ENCODE measurements at regions of chr1 and their contacts with region 1.

Region 1: DNA sequence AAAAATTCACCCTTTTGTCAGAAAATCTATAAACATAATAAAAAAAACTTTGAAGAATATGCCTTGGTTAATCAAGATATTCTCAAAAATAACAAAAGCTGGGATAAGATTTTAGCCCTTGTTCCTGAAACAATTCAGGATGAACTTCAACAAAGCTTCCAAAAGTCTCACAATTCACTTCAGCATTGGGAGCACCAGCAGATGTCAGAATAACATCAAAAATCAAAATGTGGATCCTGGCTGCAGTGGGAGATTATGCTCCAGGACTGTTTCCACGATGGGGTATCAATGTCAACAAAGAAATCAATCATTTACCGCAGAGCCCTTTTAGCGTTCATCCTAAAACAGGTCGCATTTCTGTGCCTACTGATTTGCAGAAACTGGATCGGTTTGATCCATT is 35.2 kb downstream of the ZNF670 start:
- DNase-seq: no peak
- ATAC-seq: no peak
- H3K4me3 ChIP-seq: no peak overlapping the region
- H3K27ac ChIP-seq: no peak overlapping the region
- H3K4me1 ChIP-seq: no peaks in the 10 kb centered on the region
- H3K27me3 ChIP-seq: no peaks in the 10 kb centered on the region
- CTCF ChIP-seq: peak in 8 of 12 donors; percentile 11 to 51 (median 30)
- POLR2A ChIP-seq: no peak

Region 2: GRCh38 chr1:246932366-246932700 is 111.1 kb before region 1 on chr1:
- intact Hi-C with region 1: no loop called
- DNase-seq: no peak
- ATAC-seq: no peak
- H3K4me3 ChIP-seq: peak overlapping the region; percentile 61 to 98 (median 90)
- H3K27ac ChIP-seq: peak overlapping the region in 10 of 12 donors; percentile 89 to 99 (median 96)
- H3K4me1 ChIP-seq: peaks cover 0 to 29% (median 18%) of the 10 kb centered on the region in 12 donors
- H3K27me3 ChIP-seq: no peaks in the 10 kb centered on the region
- CTCF ChIP-seq: no peak
- POLR2A ChIP-seq: no peak

Region 3: GRCh38 chr1:247373721-247374141 is 330.3 kb after region 1 on chr1:
- intact Hi-C with region 1: loop called in 4 of 10 experiments (anchors 5 to 10 kb)
- DNase-seq: peak in 4 of 5 donors; percentile 37 to 68 (median 62)
- ATAC-seq: peak in 3 of 4 donors; percentile 54 to 81 (median 68)
- H3K4me3 ChIP-seq: peak overlapping the region in 10 of 12 donors; percentile 29 to 63 (median 40)
- H3K27ac ChIP-seq: no peak overlapping the region
- H3K4me1 ChIP-seq: peaks cover 0 to 8% (median 0%) of the 10 kb centered on the region in 12 donors
- H3K27me3 ChIP-seq: peaks cover 0 to 8% (median 0%) of the 10 kb centered on the region in 9 donors
- CTCF ChIP-seq: peak; percentile 20 to 60 (median 48)
- POLR2A ChIP-seq: no peak